Naive thymus-derived CD4-positive, alpha-beta T cell (primary cell): ENCODE measurements at regions of chr12 and their contacts with region 1.

Region 1: GRCh38 chr12:111529424-111530368 is 69.4 kb downstream of the ATXN2 start:
- DNase-seq: peak; percentile 25 to 65 (median 57)
- ATAC-seq: peak; percentile 85
- H3K4me3 ChIP-seq: no peak overlapping the region
- H3K4me3 Mint-ChIP-seq: no peak overlapping the region
- H3K27ac ChIP-seq: no peak overlapping the region
- H3K27ac Mint-ChIP-seq: peak overlapping the region in 2 of 9 donors; percentile 10 to 56
- H3K4me1 ChIP-seq: no peaks in the 10 kb centered on the region
- H3K4me1 Mint-ChIP-seq: peaks cover 0 to 9% (median 6%) of the 10 kb centered on the region in 7 donors
- H3K27me3 ChIP-seq: no peaks in the 10 kb centered on the region
- H3K27me3 Mint-ChIP-seq: no peaks in the 10 kb centered on the region

Region 2: DNA sequence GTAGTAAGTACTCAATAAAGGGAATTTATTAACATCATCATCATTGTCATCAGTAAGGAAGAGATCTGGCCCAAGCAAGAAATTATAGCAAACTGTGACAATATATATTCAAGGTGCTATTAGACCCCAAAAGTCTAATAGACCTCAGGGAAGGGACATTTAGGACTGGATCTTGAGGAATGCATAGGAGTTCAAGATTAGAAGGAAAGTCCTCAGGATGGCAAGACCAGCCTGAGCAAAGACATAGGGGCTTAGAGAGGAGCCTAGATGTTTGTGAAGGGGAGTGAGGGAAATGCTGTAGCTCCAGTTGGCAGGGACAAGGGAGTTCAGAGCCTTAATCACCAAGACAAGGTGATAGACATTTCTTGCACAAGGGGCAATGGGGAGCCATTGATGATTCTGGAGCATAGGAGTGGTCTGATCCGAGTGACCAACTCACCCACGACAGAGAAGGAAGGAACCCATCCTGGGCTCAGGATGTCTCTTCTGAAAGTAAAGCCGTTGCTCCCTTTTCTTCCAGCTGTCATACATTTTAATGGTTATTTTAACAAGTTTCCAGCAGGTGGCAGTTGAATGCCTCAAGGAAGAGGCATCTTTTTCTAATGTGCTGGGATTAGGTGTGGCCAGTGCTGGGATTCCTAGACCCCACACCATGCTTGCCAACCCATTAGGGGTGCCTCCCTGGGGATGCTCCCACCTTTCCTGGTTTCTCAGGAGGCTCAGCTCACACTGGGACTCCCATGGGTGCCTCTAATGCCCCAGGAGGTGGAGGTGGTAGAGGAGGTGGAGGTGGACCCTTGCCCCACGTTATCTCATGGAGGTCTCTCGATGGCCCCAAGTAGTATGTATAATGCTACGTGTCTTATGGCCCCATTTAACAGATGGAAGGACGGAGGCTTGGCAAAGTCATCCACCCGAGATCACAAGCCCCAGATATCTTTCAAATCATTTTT is 198.6 kb before region 1 on chr12:
- CTCF ChIA-PET with region 1: no interaction called
- POLR2A ChIA-PET with region 1: no interaction called
- intact Hi-C with region 1: loop called in 1 of 2 experiments (anchors 2 kb)
- DNase-seq: no peak
- ATAC-seq: peak; percentile 37
- H3K4me3 ChIP-seq: no peak overlapping the region
- H3K4me3 Mint-ChIP-seq: no peak overlapping the region
- H3K27ac ChIP-seq: no peak overlapping the region
- H3K27ac Mint-ChIP-seq: no peak overlapping the region
- H3K4me1 ChIP-seq: no peaks in the 10 kb centered on the region
- H3K4me1 Mint-ChIP-seq: peaks cover 0 to 10% (median 4%) of the 10 kb centered on the region in 7 donors
- H3K27me3 ChIP-seq: no peaks in the 10 kb centered on the region
- H3K27me3 Mint-ChIP-seq: peaks cover 0 to 5% (median 2%) of the 10 kb centered on the region in 5 donors

Region 3: DNA sequence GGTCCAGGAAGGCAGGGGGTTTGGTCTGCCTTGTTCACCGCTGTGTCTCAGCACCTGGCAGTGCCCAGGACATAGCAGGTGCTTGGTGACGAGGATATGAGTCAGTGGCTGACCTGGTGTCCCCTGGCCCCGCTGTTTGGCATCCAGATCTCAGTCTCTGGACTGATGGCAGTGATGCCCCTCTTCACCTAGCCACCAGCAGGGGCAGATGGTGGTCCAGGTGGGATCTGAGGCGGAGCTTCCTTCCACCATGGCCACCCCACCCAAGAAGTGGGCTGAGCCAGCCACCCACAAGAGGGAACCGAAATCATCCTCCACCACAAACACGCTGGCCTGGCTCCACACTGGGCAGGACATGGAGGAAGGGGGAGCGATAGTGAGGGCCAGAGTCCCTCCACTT is 140.1 kb before region 1 on chr12:
- CTCF ChIA-PET with region 1: no interaction called
- POLR2A ChIA-PET with region 1: no interaction called
- intact Hi-C with region 1: no loop called
- DNase-seq: no peak
- ATAC-seq: no peak
- H3K4me3 ChIP-seq: no peak overlapping the region
- H3K4me3 Mint-ChIP-seq: no peak overlapping the region
- H3K27ac ChIP-seq: no peak overlapping the region
- H3K27ac Mint-ChIP-seq: peak overlapping the region in 1 of 9 donors; percentile 20
- H3K4me1 ChIP-seq: no peaks in the 10 kb centered on the region
- H3K4me1 Mint-ChIP-seq: peaks cover 0 to 6% (median 0%) of the 10 kb centered on the region in 7 donors
- H3K27me3 ChIP-seq: no peaks in the 10 kb centered on the region
- H3K27me3 Mint-ChIP-seq: peaks cover 0 to 4% (median 0%) of the 10 kb centered on the region in 5 donors